Stomach (tissue), 19 donors: ENCODE measurements at regions of chr2 and their contacts with region 1.

Region 1: GRCh38 chr2:56132138-56132537 is 51.7 kb upstream of the CCDC85A start:
- DNase-seq: peak in 1 of 2 donors; percentile 72
- H3K4me3 ChIP-seq: no peak overlapping the region
- H3K27ac ChIP-seq: no peak overlapping the region
- H3K4me1 ChIP-seq: no peaks in the 10 kb centered on the region
- H3K27me3 ChIP-seq: no peaks in the 10 kb centered on the region
- CTCF ChIP-seq: peak in 4 of 7 experiments; percentile 18 to 30 (median 22)
- EP300 ChIP-seq: no peak
- POLR2A ChIP-seq: no peak

Region 2: GRCh38 chr2:55718165-55719008 is 413.8 kb before region 1 on chr2:
- intact Hi-C with region 1: loop called (anchors 10 kb)
- DNase-seq: peak; percentile 54 to 88
- H3K4me3 ChIP-seq: no peak overlapping the region
- H3K27ac ChIP-seq: no peak overlapping the region
- H3K4me1 ChIP-seq: no peaks in the 10 kb centered on the region
- H3K27me3 ChIP-seq: no peaks in the 10 kb centered on the region
- CTCF ChIP-seq: peak in 4 of 7 experiments; percentile 64 to 75 (median 68)
- EP300 ChIP-seq: no peak
- POLR2A ChIP-seq: no peak

Region 3: DNA sequence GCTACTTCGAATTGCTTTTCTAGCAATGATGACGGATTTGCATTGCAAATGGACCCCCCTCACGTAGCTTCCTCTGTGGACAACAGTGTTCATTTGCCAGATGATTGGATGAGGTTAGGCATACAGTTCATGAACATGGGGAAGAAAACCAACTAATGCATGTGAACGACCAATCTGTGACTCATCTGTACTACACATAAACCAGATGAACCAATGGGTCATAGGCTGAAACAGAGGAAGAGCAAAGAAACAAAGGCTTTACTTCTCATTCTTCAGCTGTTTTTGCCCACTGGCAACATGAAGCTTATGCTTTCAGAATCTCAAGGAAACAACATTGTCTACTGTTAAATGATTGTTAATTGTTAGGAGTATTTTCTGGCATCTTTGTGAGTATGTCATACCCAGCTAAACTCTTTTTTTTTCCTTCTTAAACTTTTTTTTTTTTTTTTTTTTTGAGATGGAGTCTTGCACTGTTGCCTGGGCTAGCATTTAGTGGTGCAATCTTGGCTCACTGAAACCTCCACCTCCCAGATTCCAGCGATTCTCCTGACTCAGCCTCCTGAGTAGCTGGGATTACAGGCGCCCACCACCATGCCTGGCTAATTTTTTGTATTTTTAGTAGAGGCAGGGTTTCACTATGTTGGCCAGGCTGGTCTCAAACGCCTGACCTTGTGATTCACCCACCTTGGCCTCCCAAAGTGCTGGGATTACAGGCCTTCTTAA is 244.1 kb before region 1 on chr2:
- intact Hi-C with region 1: no loop called
- DNase-seq: no peak
- H3K4me3 ChIP-seq: no peak overlapping the region
- H3K27ac ChIP-seq: peak overlapping the region in 4 of 5 donors; percentile 49 to 73 (median 58)
- H3K4me1 ChIP-seq: peaks cover 13 to 51% (median 24%) of the 10 kb centered on the region in 4 donors
- H3K27me3 ChIP-seq: no peaks in the 10 kb centered on the region
- CTCF ChIP-seq: no peak
- EP300 ChIP-seq: no peak
- POLR2A ChIP-seq: no peak

Region 4: GRCh38 chr2:57080035-57080434 is 947.9 kb after region 1 on chr2:
- intact Hi-C with region 1: no loop called
- DNase-seq: no peak
- H3K4me3 ChIP-seq: no peak overlapping the region
- H3K27ac ChIP-seq: no peak overlapping the region
- H3K4me1 ChIP-seq: no peaks in the 10 kb centered on the region
- H3K27me3 ChIP-seq: no peaks in the 10 kb centered on the region
- CTCF ChIP-seq: no peak
- EP300 ChIP-seq: no peak
- POLR2A ChIP-seq: no peak